Mammary epithelial cell (primary cell): ENCODE measurements at regions of chr1 and their contacts with region 1.

Region 1: GRCh38 chr1:8323706-8324105 is 5.8 kb downstream of the SLC45A1 start:
- DNase-seq: no peak
- H3K4me3 ChIP-seq: no peak overlapping the region
- H3K27ac ChIP-seq: no peak overlapping the region
- H3K4me1 ChIP-seq: no peaks in the 10 kb centered on the region
- H3K27me3 ChIP-seq: no peaks in the 10 kb centered on the region
- CTCF ChIP-seq: no peak

Region 2: DNA sequence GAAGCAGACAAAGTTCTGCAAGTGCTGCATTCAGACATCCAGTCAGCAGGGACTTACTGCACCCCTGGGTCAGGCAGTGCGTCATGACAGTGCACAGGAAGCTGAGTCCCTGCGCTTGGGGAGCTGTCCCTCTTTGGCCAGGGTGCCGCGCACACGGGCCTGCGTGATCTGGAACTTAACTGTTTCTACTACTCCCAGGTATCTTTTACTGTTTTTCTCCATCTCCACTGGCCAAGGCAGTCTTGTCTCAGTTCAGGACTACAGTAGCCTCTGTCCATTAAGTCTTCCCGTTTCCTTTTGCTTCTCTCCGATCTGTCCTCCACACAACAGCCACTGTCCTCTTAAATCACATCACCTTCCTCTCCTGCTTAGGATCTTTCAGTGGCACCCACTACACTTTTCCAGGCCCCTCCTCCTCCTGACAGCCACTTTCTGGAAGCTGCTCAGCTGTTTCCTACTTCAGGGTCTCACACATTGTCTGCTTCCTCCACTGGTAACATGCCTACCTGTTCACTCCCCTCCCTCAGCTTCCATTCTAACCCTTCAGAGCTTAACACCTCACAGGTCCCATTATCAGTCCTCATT is 313.5 kb before region 1 on chr1:
- CTCF ChIA-PET with region 1: no interaction called
- dilution Hi-C with region 1: loop called (anchors 5 kb)
- in situ Hi-C with region 1: loop called in 1 of 2 experiments (anchors 10 kb)
- intact Hi-C with region 1: no loop called
- DNase-seq: no peak
- H3K4me3 ChIP-seq: no peak overlapping the region
- H3K27ac ChIP-seq: no peak overlapping the region
- H3K4me1 ChIP-seq: peaks cover 26% of the 10 kb centered on the region
- H3K27me3 ChIP-seq: no peaks in the 10 kb centered on the region
- CTCF ChIP-seq: no peak

Region 3: GRCh38 chr1:8364528-8365442 is 41.1 kb after region 1 on chr1:
- CTCF ChIA-PET with region 1: no interaction called
- dilution Hi-C with region 1: loop called (anchors 5 kb)
- in situ Hi-C with region 1: no loop called
- intact Hi-C with region 1: no loop called
- DNase-seq: no peak
- H3K4me3 ChIP-seq: no peak overlapping the region
- H3K27ac ChIP-seq: no peak overlapping the region
- H3K4me1 ChIP-seq: peaks cover 7% of the 10 kb centered on the region
- H3K27me3 ChIP-seq: no peaks in the 10 kb centered on the region
- CTCF ChIP-seq: no peak

Region 4: GRCh38 chr1:8382051-8382505 is 58.4 kb after region 1 on chr1:
- CTCF ChIA-PET with region 1: no interaction called
- dilution Hi-C with region 1: no loop called
- in situ Hi-C with region 1: no loop called
- intact Hi-C with region 1: no loop called
- DNase-seq: no peak
- H3K4me3 ChIP-seq: no peak overlapping the region
- H3K27ac ChIP-seq: peak overlapping the region; percentile 9
- H3K4me1 ChIP-seq: peaks cover 16% of the 10 kb centered on the region
- H3K27me3 ChIP-seq: no peaks in the 10 kb centered on the region
- CTCF ChIP-seq: no peak